ENCODE measurements at regions of chr3 and their contacts with region 1.

Region 1: GRCh38 chr3:159852821-159853505 is 135.7 kb upstream of the IL12A start:
- DNase-seq: peak; percentile 76 to 77
- ATAC-seq: peak; percentile 66 to 88 (median 76)
- H3K4me3 ChIP-seq: peak overlapping the region in 9 of 10 donors; percentile 16 to 54 (median 46)
- H3K27ac ChIP-seq: peak overlapping the region; percentile 68 to 94 (median 90)
- H3K4me1 ChIP-seq: peaks cover 4 to 100% (median 74%) of the 10 kb centered on the region in 9 donors
- H3K27me3 ChIP-seq: no peaks in the 10 kb centered on the region
- CTCF ChIP-seq: no peak

Region 2: GRCh38 chr3:159897331-159898075 is 44.5 kb after region 1 on chr3:
- intact Hi-C with region 1: loop called in 1 of 10 experiments (anchors 5 kb)
- DNase-seq: no peak
- ATAC-seq: peak in 7 of 8 donors; percentile 13 to 54 (median 39)
- H3K4me3 ChIP-seq: no peak overlapping the region
- H3K27ac ChIP-seq: peak overlapping the region in 8 of 10 donors; percentile 6 to 68 (median 42)
- H3K4me1 ChIP-seq: peaks cover 13 to 68% (median 49%) of the 10 kb centered on the region in 9 donors
- H3K27me3 ChIP-seq: no peaks in the 10 kb centered on the region
- CTCF ChIP-seq: no peak

Region 3: GRCh38 chr3:160464321-160464720 is 611.4 kb after region 1 on chr3:
- intact Hi-C with region 1: no loop called
- DNase-seq: no peak
- ATAC-seq: no peak
- H3K4me3 ChIP-seq: no peak overlapping the region
- H3K27ac ChIP-seq: no peak overlapping the region
- H3K4me1 ChIP-seq: no peaks in the 10 kb centered on the region
- H3K27me3 ChIP-seq: peaks cover 0 to 7% (median 0%) of the 10 kb centered on the region in 7 donors
- CTCF ChIP-seq: no peak